ENCODE measurements at regions of chr7 and their contacts with region 1.

Region 1: DNA sequence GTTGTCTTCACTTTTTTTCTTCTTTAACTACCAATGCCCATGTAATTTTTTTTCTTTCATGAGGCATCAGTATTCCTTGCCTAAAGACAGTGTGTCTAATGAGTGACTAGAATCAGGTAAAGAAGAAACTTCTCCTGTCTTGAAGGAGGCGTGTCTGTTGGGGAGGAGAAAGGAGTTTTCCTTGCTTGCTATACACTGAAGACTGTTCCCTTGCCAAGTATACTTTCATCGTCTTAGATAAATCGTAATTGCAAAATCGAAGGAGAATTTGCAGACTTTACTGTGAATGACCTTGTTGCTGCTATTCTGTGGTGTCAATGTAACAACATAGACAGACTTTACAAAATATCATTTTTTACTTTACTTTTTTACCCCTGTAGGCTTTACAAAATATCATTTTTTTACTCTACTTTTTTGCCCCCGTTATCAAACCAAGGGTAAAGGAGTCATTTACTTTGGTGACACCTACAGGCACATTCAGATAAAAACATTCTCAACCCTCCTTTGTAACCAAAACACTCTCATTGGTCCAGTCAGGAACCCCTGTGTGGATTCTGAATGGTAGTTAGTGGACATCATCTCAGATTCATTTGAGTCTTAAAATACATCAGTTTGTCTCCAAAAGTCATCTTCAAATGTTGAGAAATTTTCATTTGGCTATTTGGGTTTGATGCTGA is 232.4 kb downstream of the AHR start:
- DNase-seq: no peak
- H3K4me3 Mint-ChIP-seq: no peak overlapping the region
- H3K27ac Mint-ChIP-seq: no peak overlapping the region
- H3K4me1 Mint-ChIP-seq: no peaks in the 10 kb centered on the region
- H3K27me3 Mint-ChIP-seq: peaks cover 10% of the 10 kb centered on the region

Region 2: GRCh38 chr7:16926283-16926682 is 604.6 kb before region 1 on chr7:
- CTCF ChIA-PET with region 1: no interaction called
- intact Hi-C with region 1: loop called (anchors 1 kb)
- DNase-seq: peak; percentile 33
- H3K4me3 Mint-ChIP-seq: no peak overlapping the region
- H3K27ac Mint-ChIP-seq: no peak overlapping the region
- H3K4me1 Mint-ChIP-seq: peaks cover 27% of the 10 kb centered on the region
- H3K27me3 Mint-ChIP-seq: peaks cover 2% of the 10 kb centered on the region

Region 3: DNA sequence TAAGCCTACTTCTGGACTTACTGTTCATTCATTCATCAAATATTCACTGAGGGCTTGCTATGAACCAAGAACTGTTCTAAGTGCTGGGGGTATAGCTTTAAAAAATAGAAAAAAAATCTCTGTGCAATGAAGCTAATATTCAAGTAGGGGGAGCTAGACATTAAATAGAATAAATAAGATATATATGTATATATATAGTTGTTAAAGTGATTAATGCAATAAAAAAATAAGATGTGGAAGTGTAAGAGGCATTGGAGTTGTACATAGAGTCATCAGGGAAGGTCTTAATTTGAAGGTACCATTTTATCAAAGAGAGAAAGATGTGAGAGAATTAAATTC is 467.9 kb before region 1 on chr7:
- CTCF ChIA-PET with region 1: no interaction called
- intact Hi-C with region 1: loop called (anchors 2 kb)
- DNase-seq: no peak
- H3K4me3 Mint-ChIP-seq: no peak overlapping the region
- H3K27ac Mint-ChIP-seq: no peak overlapping the region
- H3K4me1 Mint-ChIP-seq: peaks cover 2% of the 10 kb centered on the region
- H3K27me3 Mint-ChIP-seq: no peaks in the 10 kb centered on the region